ENCODE measurements at regions of chr12 and their contacts with region 1.

Region 1: DNA sequence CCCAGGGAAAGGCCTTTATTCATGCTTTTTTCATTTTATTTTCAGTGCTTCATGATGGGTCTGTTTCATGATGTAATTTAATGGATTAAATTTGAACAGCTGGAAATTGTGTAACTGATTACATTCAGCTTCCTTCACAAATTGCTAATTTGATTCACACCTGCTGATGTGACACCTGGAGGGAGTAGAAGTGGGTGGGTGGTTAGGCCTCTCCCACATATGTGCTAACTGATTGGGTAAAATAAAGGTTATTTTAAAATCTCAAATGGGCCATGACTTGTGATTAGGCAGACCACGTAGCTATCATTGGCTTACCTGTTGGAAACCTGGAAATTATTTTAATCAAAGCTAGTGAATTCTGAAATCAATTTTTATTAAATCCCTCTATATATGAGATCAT is 142.1 kb downstream of the GXYLT1 start:
- DNase-seq: no peak
- H3K4me3 ChIP-seq: no peak overlapping the region
- H3K27ac ChIP-seq: no peak overlapping the region
- H3K4me1 ChIP-seq: no peaks in the 10 kb centered on the region
- H3K27me3 ChIP-seq: no peaks in the 10 kb centered on the region
- CTCF ChIP-seq: no peak
- POLR2A ChIP-seq: no peak

Region 2: DNA sequence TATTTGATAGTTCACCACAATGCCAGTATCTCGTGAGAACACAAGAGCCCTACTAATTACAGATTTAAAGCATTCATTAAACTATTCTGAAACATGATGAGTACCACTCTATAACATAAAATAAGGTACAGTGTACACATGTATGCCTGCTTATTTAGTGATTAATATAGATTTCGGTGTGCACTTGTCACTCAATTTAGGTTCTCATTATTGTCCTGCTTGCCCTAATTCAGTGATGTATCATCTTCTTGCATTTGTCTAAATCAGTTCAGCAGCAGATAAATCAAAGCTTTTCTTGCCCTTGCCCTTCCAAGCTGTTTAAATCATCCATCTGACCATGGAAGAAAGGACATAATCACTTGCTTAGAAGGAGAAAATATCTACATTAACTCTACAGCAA is 217.6 kb before region 1 on chr12:
- intact Hi-C with region 1: loop called (anchors 10 kb)
- DNase-seq: no peak
- H3K4me3 ChIP-seq: no peak overlapping the region
- H3K27ac ChIP-seq: no peak overlapping the region
- H3K4me1 ChIP-seq: no peaks in the 10 kb centered on the region
- H3K27me3 ChIP-seq: no peaks in the 10 kb centered on the region
- CTCF ChIP-seq: no peak
- POLR2A ChIP-seq: no peak

Region 3: GRCh38 chr12:41869432-41869831 is 133.1 kb before region 1 on chr12:
- intact Hi-C with region 1: no loop called
- DNase-seq: no peak
- H3K4me3 ChIP-seq: no peak overlapping the region
- H3K27ac ChIP-seq: no peak overlapping the region
- H3K4me1 ChIP-seq: no peaks in the 10 kb centered on the region
- H3K27me3 ChIP-seq: no peaks in the 10 kb centered on the region
- CTCF ChIP-seq: no peak
- POLR2A ChIP-seq: no peak

Region 4: DNA sequence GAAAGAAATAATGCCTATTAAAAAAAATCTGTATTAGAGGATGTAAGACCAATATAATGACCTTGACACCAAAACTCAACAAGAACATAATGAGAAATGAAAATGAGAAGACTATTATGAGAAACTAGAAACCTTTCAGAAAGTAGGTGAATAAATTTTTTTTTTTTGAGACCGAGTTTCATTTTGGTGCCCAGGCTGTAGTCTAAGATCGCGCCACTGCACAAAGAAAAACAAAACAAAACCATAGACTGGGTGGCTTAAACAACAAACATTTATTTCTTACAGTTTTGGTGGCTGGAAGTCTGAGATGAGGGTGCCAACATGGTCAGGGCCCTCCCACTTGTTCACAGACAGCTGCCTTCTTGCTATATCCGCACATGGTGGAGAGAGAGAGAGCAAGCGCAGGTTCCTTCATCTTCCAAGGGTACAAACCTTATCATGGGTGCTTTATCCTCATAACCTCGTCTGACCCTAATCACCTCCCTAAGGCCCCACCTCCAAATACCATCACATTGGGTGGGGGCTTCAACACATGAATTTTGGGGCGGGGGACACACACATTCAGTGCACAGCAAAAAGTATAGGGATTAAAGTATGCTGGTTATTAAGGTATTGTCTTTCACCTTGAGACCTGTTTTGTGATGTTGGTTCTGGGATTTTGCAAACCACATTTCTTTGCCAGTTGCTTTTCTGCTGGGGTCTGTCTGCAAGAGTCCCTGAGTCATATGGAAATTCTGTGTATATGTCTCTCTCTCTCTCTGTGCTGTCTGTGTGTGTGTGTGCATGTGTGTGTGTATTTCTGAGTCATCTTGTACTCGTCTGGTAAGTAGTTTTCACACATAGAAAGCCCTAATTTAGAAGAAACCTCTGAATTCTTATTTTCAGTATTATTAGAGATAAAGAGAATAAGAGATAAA is 297.1 kb after region 1 on chr12:
- intact Hi-C with region 1: no loop called
- DNase-seq: no peak
- H3K4me3 ChIP-seq: no peak overlapping the region
- H3K27ac ChIP-seq: no peak overlapping the region
- H3K4me1 ChIP-seq: no peaks in the 10 kb centered on the region
- H3K27me3 ChIP-seq: no peaks in the 10 kb centered on the region
- CTCF ChIP-seq: no peak
- POLR2A ChIP-seq: no peak